ENCODE measurements at regions of chr2 and their contacts with region 1.

Region 1: DNA sequence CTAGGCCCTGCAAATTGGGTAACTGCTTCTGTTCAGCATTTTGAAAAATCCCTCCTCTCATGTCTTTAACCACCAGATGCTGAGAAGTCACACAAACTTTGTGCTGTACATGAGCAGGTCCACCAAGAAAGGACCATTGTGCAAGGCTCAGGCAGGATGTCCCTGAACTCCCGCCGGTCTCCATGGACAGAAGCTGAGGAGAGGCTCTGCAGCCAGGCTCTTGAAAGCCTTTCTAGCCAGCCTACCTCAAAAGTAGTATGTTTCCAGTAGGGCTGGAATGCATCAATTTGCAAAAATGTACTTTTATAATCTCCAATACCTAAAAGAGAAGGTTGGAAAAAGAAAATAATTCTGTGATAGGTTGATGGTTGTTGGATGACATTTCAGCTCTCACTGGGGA is 47.0 kb upstream of the SH3BP4 start:
- DNase-seq: no peak
- H3K4me3 ChIP-seq: no peak overlapping the region
- CTCF ChIP-seq: no peak

Region 2: GRCh38 chr2:234858128-234858527 is 46.7 kb before region 1 on chr2:
- in situ Hi-C with region 1: loop called (anchors 5 kb)
- DNase-seq: no peak
- H3K4me3 ChIP-seq: no peak overlapping the region
- CTCF ChIP-seq: no peak